Naive thymus-derived CD4-positive, alpha-beta T cell (primary cell): ENCODE measurements at regions of chr10 and their contacts with region 1.

Region 1: GRCh38 chr10:97425964-97426775 is at the start of gene PGAM1:
- DNase-seq: peak; percentile 93 to 98 (median 97)
- ATAC-seq: peak; percentile 91
- H3K4me3 ChIP-seq: peak within 1 kb of the TSS; percentile 92
- H3K4me3 Mint-ChIP-seq: peak within 1 kb of the TSS; percentile 83 to 97 (median 95)
- H3K27ac ChIP-seq: peak within 1 kb of the TSS; percentile 87
- H3K27ac Mint-ChIP-seq: peak within 1 kb of the TSS; percentile 77 to 99 (median 95)
- H3K4me1 ChIP-seq: peaks cover 20 to 29% of the 10 kb centered on the region in 2 donors
- H3K4me1 Mint-ChIP-seq: peaks cover 10 to 53% (median 34%) of the 10 kb centered on the region in 7 donors
- H3K27me3 ChIP-seq: no peaks in the 10 kb centered on the region
- H3K27me3 Mint-ChIP-seq: peaks cover 0 to 2% (median 0%) of the 10 kb centered on the region in 5 donors
- total RNA-seq, gene PGAM1: 58.5 to 536 (median 69.8) TPM

Region 2: GRCh38 chr10:97334370-97335175 is 91.6 kb before region 1 on chr10 and contains the start of gene FRAT2:
- CTCF ChIA-PET with region 1: no interaction called
- POLR2A ChIA-PET with region 1: no interaction called
- intact Hi-C with region 1: loop called in 1 of 2 experiments (anchors 1 kb)
- DNase-seq: peak; percentile 85 to 96 (median 92)
- ATAC-seq: peak; percentile 94
- H3K4me3 ChIP-seq: peak within 1 kb of the TSS; percentile 78
- H3K4me3 Mint-ChIP-seq: peak within 1 kb of the TSS; percentile 88 to 98 (median 94)
- H3K27ac ChIP-seq: peak within 1 kb of the TSS; percentile 97
- H3K27ac Mint-ChIP-seq: peak within 1 kb of the TSS; percentile 89 to 97 (median 93)
- H3K4me1 ChIP-seq: peaks cover 20 to 24% of the 10 kb centered on the region in 2 donors
- H3K4me1 Mint-ChIP-seq: peaks cover 28 to 48% (median 42%) of the 10 kb centered on the region in 7 donors
- H3K27me3 ChIP-seq: no peaks in the 10 kb centered on the region
- H3K27me3 Mint-ChIP-seq: peaks cover 0 to 36% (median 0%) of the 10 kb centered on the region in 5 donors
- total RNA-seq, gene FRAT2: 9.3 to 39.7 (median 29.8) TPM

Region 3: GRCh38 chr10:97412891-97413304 is 13.3 kb before region 1 on chr10:
- CTCF ChIA-PET with region 1: interaction called, 4 read pairs
- POLR2A ChIA-PET with region 1: interaction called, 4 read pairs
- intact Hi-C with region 1: loop called (anchors 1 kb)
- DNase-seq: peak in 1 of 9 donors; percentile 64
- ATAC-seq: no peak
- H3K4me3 ChIP-seq: no peak overlapping the region
- H3K4me3 Mint-ChIP-seq: peak overlapping the region in 4 of 10 donors; percentile 3 to 70 (median 36)
- H3K27ac ChIP-seq: no peak overlapping the region
- H3K27ac Mint-ChIP-seq: peak overlapping the region; percentile 3 to 93 (median 84)
- H3K4me1 ChIP-seq: peaks cover 20 to 22% of the 10 kb centered on the region in 2 donors
- H3K4me1 Mint-ChIP-seq: peaks cover 25 to 45% (median 41%) of the 10 kb centered on the region in 7 donors
- H3K27me3 ChIP-seq: no peaks in the 10 kb centered on the region
- H3K27me3 Mint-ChIP-seq: no peaks in the 10 kb centered on the region

Region 4: GRCh38 chr10:97463363-97464132 is 37.4 kb after region 1 on chr10:
- CTCF ChIA-PET with region 1: no interaction called
- POLR2A ChIA-PET with region 1: no interaction called
- intact Hi-C with region 1: no loop called
- DNase-seq: peak in 7 of 9 donors; percentile 31 to 55 (median 46)
- ATAC-seq: peak; percentile 82
- H3K4me3 ChIP-seq: no peak overlapping the region
- H3K4me3 Mint-ChIP-seq: no peak overlapping the region
- H3K27ac ChIP-seq: no peak overlapping the region
- H3K27ac Mint-ChIP-seq: peak overlapping the region in 7 of 9 donors; percentile 24 to 76 (median 50)
- H3K4me1 ChIP-seq: no peaks in the 10 kb centered on the region
- H3K4me1 Mint-ChIP-seq: peaks cover 0 to 3% (median 0%) of the 10 kb centered on the region in 7 donors
- H3K27me3 ChIP-seq: no peaks in the 10 kb centered on the region
- H3K27me3 Mint-ChIP-seq: no peaks in the 10 kb centered on the region